Ascending aorta (tissue), 2 donors: ENCODE measurements at regions of chr12 and their contacts with region 1.

Region 1: DNA sequence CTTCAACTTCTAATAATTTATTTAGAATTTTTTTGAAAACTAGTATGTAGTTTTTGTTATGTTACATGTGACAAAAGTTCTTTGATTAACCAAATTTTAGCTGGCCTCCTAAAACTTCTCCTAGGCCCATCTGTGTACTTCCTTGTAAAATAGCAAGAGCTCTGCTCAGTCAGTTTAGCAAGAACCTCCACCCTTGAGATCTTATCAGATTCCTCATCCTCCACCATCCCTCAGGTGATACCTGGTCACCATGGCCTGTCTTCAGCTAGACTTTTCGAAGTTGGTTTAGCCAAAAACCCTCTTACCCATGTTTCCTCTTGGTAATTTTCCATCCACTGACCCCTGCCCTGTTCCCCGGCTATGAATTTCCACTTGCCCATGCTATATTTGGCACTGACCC is 142.4 kb downstream of the ANKS1B start:
- DNase-seq: no peak
- H3K4me3 ChIP-seq: no peak overlapping the region
- H3K27ac ChIP-seq: no peak overlapping the region
- H3K4me1 ChIP-seq: no peaks in the 10 kb centered on the region
- H3K27me3 ChIP-seq: no peaks in the 10 kb centered on the region
- CTCF ChIP-seq: no peak

Region 2: DNA sequence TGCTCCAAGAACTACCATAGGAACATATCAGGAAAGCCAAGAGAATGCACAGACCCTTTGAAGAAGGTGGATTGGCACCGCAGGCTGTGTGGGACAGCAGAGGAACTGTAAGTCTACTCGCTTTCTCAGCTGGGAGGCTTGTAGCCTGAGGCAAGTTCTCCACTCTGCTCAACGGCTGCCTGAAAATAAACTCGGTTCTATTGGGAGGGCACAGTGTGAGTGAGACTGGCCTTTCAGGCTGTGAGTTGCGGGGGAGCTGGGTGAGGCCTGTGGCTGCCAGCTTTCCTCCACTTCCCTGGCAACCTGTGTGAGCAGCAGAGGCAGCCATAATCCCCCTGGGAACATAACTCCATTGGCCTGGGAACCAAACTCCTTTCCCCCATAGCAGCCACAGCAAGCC is 10.4 kb after region 1 on chr12:
- intact Hi-C with region 1: loop called (anchors 2 kb)
- DNase-seq: no peak
- H3K4me3 ChIP-seq: no peak overlapping the region
- H3K27ac ChIP-seq: no peak overlapping the region
- H3K4me1 ChIP-seq: no peaks in the 10 kb centered on the region
- H3K27me3 ChIP-seq: no peaks in the 10 kb centered on the region
- CTCF ChIP-seq: no peak

Region 3: GRCh38 chr12:99935608-99936007 is 93.3 kb after region 1 on chr12:
- intact Hi-C with region 1: no loop called
- DNase-seq: no peak
- H3K4me3 ChIP-seq: no peak overlapping the region
- H3K27ac ChIP-seq: no peak overlapping the region
- H3K4me1 ChIP-seq: no peaks in the 10 kb centered on the region
- H3K27me3 ChIP-seq: no peaks in the 10 kb centered on the region
- CTCF ChIP-seq: no peak